H1 (cell line): ENCODE measurements at regions of chr1 and their contacts with region 1.

Region 1: DNA sequence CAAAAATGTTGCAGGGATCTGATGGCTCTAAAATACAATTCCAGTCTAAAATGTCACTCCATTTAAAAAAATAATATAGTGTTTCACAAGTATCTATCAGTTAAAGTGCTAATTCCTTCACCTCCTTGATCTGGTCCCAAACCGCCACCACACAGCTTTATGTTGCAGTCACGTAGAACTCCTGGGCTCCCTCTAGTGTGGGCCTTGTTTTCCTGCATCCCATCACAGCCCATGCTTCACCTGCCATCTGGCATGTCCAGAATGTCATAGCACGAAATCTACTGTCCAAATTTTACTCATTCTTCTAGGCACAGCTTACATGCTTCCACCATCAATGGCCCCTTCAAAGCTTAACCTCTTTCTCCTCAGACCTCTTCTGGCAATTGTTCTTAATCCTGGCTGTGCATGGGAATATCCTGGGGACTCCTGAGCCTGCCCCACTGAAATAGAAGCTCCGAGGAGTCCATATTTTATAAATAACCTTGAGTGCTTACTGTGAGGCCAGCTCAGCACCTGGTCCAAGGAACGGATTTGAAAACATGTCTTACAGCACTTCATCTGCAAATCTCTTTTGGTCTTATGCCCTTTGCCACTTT is 15.5 kb downstream of the FYB2 start:
- DNase-seq: peak in 1 of 2 experiments; percentile 68
- H3K4me3 ChIP-seq: no peak overlapping the region
- H3K27ac ChIP-seq: no peak overlapping the region
- H3K4me1 ChIP-seq: no peaks in the 10 kb centered on the region
- H3K27me3 ChIP-seq: peaks cover 0 to 1% (median 0%) of the 10 kb centered on the region in 4 experiments; a peak in 2 of 7 replicates
- CTCF ChIP-seq: peak; percentile 84 to 97 (median 89)
- EP300 ChIP-seq: no peak
- POLR2A ChIP-seq: no peak
- RAD21 ChIP-seq: peak; percentile 75 to 77

Region 2: GRCh38 chr1:56758135-56758534 is 45.5 kb before region 1 on chr1:
- CTCF ChIA-PET with region 1: interaction called, 39 read pairs
- POLR2A ChIA-PET with region 1: no interaction called
- DNase-seq: peak; percentile 21 to 47
- H3K4me3 ChIP-seq: no peak overlapping the region
- H3K27ac ChIP-seq: no peak overlapping the region
- H3K4me1 ChIP-seq: no peaks in the 10 kb centered on the region
- H3K27me3 ChIP-seq: no peaks in the 10 kb centered on the region
- CTCF ChIP-seq: peak; percentile 63 to 78 (median 70)
- EP300 ChIP-seq: no peak
- POLR2A ChIP-seq: no peak
- RAD21 ChIP-seq: peak; percentile 81 to 86

Region 3: DNA sequence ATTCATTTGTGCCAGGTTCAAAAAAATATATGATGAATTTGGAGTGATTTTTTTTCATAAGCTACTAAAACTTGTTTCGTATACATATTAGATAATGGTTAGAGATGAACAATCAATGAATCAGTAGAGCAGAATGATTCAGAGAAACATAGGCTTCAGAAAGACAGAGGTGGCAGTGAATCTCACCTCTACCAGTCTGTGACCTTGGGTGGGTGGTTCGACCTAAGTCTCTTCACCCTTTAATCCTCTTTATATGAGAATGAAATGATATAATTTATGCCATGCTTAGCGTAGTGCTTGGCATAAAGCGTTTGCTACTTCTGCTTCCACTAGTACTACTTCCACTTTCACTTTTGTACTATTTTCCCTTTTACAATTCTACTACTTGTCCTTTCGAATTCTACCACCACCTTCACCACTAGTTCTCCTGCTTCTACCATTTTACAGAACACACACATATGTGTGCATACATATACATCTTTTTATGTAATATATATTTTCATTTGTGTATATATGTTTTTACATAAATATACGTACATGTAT is 29.5 kb before region 1 on chr1:
- CTCF ChIA-PET with region 1: interaction called, 13 read pairs
- POLR2A ChIA-PET with region 1: no interaction called
- DNase-seq: no peak
- H3K4me3 ChIP-seq: no peak overlapping the region
- H3K27ac ChIP-seq: no peak overlapping the region
- H3K4me1 ChIP-seq: no peaks in the 10 kb centered on the region
- H3K27me3 ChIP-seq: no peaks in the 10 kb centered on the region
- CTCF ChIP-seq: no peak
- EP300 ChIP-seq: no peak
- POLR2A ChIP-seq: no peak
- RAD21 ChIP-seq: no peak

Region 4: DNA sequence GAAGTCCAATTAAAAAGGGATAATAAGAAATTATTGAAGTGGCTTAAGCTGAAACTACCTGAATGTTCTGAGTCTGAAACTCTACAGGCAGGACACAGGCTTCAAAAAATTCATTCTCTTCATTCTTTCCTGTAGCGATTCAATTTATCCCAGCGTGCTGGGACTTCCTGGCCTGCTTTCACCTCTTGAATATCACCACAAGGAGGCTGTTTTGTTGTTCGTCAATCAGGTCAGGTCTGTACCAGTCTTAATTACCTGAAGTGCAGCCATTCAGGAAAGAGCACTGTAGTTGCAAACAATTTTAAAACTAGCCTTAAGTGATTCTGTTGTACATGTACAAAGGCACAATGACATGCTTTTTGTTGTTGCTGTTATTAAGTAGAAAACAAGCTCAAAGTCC is 22.8 kb before region 1 on chr1:
- CTCF ChIA-PET with region 1: interaction called, 21 read pairs
- POLR2A ChIA-PET with region 1: no interaction called
- DNase-seq: no peak
- H3K4me3 ChIP-seq: no peak overlapping the region
- H3K27ac ChIP-seq: no peak overlapping the region
- H3K4me1 ChIP-seq: no peaks in the 10 kb centered on the region
- H3K27me3 ChIP-seq: no peaks in the 10 kb centered on the region
- CTCF ChIP-seq: peak in 2 of 3 experiments; percentile 26 to 37; a peak in 3 of 4 replicates
- EP300 ChIP-seq: no peak
- POLR2A ChIP-seq: no peak
- RAD21 ChIP-seq: peak in 1 of 2 experiments; percentile 25; a peak in 1 of 4 replicates

Region 5: DNA sequence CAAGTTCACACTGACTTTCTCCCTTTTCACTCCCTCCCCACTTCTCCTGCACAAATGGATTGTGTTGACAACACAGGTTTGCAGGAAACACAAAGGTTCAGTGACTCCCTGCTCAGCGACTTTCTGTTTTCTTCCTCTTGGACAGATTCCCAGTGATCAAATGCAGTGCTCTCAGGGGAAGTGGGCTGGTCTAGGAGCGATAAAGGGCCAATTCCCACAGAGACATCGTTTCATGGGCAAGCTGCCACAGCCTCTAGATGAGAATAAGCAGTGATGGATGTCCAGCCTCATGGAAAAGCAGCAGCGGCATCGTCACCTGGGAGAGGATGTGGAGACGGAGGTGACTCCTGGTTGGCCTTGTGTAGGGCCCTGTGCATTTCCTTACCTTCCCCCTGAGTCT is 15.1 kb before region 1 on chr1:
- CTCF ChIA-PET with region 1: interaction called, 21 read pairs
- POLR2A ChIA-PET with region 1: interaction called, 3 read pairs
- DNase-seq: no peak
- H3K4me3 ChIP-seq: no peak overlapping the region
- H3K27ac ChIP-seq: no peak overlapping the region
- H3K4me1 ChIP-seq: no peaks in the 10 kb centered on the region
- H3K27me3 ChIP-seq: no peaks in the 10 kb centered on the region
- CTCF ChIP-seq: no peak
- EP300 ChIP-seq: no peak
- POLR2A ChIP-seq: no peak
- RAD21 ChIP-seq: no peak